Activated CD4-positive, alpha-beta T cell treated with anti-CD3 and anti-CD28 coated beads, Interleukin-2, amount 10 ng/mL, durations not matched to agents 24 days and 14 days (primary cell): ENCODE measurements at regions of chr22 and their contacts with region 1.

Region 1: GRCh38 chr22:24325105-24325757 is 54.6 kb downstream of the SPECC1L start:
- DNase-seq: peak; percentile 83
- H3K4me3 Mint-ChIP-seq: peak overlapping the region; percentile 18
- H3K27ac Mint-ChIP-seq: peak overlapping the region; percentile 27
- H3K4me1 Mint-ChIP-seq: peaks cover 29% of the 10 kb centered on the region
- H3K27me3 Mint-ChIP-seq: no peaks in the 10 kb centered on the region

Region 2: DNA sequence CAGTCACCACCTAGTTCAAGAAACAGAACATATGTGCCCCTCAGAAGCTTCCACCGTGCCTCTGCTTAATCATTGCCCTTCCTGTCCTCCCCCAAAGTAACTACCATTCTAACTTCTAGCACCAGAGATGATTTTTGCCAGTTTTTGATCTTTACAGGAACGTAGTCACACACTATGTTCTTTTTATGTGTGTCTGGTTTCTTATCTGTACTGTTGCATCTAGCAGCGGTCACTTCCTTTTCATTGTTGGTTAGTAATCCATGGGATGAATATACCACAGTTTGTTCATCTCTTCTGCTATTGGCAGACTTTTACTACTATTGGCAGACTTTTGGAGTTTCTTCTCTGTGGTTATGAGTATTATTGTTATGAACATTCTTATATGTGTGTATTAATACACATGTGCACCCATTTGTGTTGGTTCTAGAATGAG is 20.0 kb before region 1 on chr22:
- intact Hi-C with region 1: loop called (anchors 2 kb)
- DNase-seq: peak; percentile 65
- H3K4me3 Mint-ChIP-seq: peak overlapping the region; percentile 10
- H3K27ac Mint-ChIP-seq: peak overlapping the region; percentile 31
- H3K4me1 Mint-ChIP-seq: peaks cover 38% of the 10 kb centered on the region
- H3K27me3 Mint-ChIP-seq: no peaks in the 10 kb centered on the region

Region 3: GRCh38 chr22:24386937-24387471 is 61.8 kb after region 1 on chr22:
- intact Hi-C with region 1: no loop called
- DNase-seq: no peak
- H3K4me3 Mint-ChIP-seq: no peak overlapping the region
- H3K27ac Mint-ChIP-seq: no peak overlapping the region
- H3K4me1 Mint-ChIP-seq: peaks cover 14% of the 10 kb centered on the region
- H3K27me3 Mint-ChIP-seq: no peaks in the 10 kb centered on the region

Region 4: DNA sequence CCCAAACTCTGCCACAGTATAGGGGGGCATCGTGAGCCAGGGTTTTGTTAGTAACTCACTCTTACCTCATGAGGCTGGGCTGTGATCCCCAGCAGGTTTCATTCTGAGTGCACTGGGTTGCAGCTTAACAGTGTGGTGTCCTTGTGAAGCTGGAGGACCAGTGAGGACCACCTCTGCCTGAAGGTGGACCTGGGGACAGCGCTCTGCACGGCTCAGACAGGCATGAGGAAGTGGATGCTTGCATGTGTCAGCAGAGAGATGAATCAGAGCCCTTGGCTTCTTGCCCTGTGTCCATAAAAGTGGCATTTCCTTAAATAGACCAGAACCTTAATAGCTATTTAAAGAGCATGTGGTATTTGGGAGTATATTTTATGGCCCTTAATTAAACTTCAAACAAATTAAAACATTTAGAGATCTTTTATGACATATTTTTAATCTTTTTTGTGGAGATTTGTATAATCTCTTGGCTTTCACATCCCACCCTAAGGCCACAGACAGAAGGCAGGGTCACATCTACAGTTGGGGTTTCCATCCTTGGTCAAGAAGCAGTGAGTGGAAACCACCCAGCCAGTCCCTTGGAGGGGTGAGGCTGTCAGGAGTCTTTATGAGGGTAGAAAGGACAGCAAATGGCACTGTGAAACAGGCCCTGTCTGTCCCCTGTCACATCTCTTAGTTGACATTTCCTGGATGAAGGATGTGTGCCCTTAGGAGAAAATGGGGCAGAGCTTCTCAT is 77.4 kb after region 1 on chr22:
- intact Hi-C with region 1: loop called (anchors 5 kb)
- DNase-seq: peak; percentile 56
- H3K4me3 Mint-ChIP-seq: peak overlapping the region; percentile 14
- H3K27ac Mint-ChIP-seq: peak overlapping the region; percentile 73
- H3K4me1 Mint-ChIP-seq: peaks cover 52% of the 10 kb centered on the region
- H3K27me3 Mint-ChIP-seq: no peaks in the 10 kb centered on the region

Region 5: DNA sequence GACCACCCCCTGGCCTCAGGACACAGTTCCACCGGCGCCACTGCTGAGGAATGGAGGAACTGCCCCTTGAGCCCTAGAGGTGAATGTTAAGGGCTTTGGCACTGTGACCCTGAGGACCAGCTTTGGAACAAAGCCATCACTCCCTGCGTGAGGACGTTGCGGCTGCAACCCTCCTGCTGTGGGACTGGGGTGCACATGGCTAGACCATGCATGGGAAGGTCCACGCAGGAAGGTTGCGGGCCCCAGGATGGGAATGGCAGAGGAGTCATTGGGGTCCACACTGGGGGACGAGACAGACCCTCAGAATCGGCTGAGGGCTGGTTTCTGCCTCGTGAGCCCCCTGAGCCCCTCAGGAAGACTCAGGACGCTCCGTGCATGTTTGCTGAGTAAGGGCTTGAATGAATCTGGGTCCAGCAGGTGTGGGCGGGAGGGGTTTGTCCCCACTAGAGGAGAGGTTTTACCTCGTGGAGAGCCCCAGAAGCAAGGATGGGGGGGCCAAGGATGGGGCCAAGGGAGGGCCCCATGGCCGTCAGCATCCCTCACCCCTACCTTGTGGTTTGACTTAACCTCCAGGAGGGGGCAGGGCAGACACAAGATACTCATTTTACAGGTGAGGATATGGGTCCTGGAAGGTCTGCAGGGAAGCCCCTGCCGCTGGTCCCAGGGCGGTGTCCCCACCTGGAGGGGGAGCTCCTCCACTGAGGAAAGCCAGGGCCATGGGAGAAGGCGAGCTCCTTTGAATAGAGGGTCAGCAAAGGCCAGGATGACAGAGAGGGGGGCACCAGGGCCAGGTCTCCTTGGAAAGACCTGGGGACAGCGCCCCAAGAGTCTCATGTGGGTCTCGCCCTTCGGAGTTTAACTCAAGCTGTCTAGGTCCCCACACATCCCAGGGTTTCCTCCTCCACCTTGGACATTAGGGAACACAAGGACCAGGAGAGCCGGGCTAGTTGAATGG is 96.0 kb after region 1 on chr22:
- intact Hi-C with region 1: loop called (anchors 1 kb)
- DNase-seq: peak; percentile 76
- H3K4me3 Mint-ChIP-seq: no peak overlapping the region
- H3K27ac Mint-ChIP-seq: no peak overlapping the region
- H3K4me1 Mint-ChIP-seq: peaks cover 15% of the 10 kb centered on the region
- H3K27me3 Mint-ChIP-seq: peaks cover 4% of the 10 kb centered on the region

Region 6: DNA sequence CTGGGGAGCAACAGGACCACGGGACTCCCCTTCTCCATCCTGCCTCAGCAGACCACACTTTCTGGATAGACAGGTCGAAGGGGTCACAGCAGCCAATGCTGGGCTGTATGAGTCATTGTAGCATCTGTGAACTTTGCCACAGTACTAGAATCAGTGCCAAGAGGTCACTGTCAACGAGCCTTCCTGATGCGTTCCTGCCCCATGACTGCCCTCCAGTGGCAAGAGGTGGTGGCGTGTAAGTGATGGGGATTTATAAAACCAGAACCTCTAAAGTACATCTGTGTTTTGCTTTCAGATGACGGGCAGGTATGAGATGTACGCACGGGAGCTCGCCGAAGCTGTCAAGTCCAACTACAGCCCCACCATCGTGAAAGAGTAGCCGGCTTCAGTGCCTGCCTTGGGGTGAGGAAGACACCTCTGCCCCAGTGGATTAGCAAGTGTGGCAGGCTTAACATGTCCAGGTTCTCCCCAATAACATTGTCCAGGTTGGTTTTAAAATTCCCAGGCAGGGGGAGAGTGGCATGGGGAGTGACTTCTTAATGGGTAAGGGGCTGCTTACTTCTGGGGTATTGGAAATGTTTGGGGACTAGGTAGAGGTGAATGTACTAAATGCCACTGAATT is 200.3 kb after region 1 on chr22:
- intact Hi-C with region 1: loop called (anchors 1 kb)
- DNase-seq: peak; percentile 95
- H3K4me3 Mint-ChIP-seq: no peak overlapping the region
- H3K27ac Mint-ChIP-seq: no peak overlapping the region
- H3K4me1 Mint-ChIP-seq: peaks cover 15% of the 10 kb centered on the region
- H3K27me3 Mint-ChIP-seq: peaks cover 5% of the 10 kb centered on the region